H1 (cell line): ENCODE measurements at regions of chr1 and their contacts with region 1.

Region 1: GRCh38 chr1:23790696-23791515 is at the start of gene LYPLA2:
- DNase-seq: peak in 1 of 2 experiments; percentile 92
- H3K4me3 ChIP-seq: peak within 1 kb of the TSS; percentile 63 to 100 (median 96)
- H3K27ac ChIP-seq: no peak within 1 kb of the TSS
- H3K4me1 ChIP-seq: peaks cover 0 to 11% (median 6%) of the 10 kb centered on the region in 4 experiments; a peak in 5 of 7 replicates
- H3K27me3 ChIP-seq: no peaks in the 10 kb centered on the region
- CTCF ChIP-seq: 0 out of 4 replicates have a peak, but pooled peaks of 1 of the 3 experiments have one; percentile 26
- EP300 ChIP-seq: no peak
- POLR2A ChIP-seq: no peak
- RAD21 ChIP-seq: no peak
- total RNA-seq, gene LYPLA2: 138 and 152 TPM in 2 replicates

Region 2: DNA sequence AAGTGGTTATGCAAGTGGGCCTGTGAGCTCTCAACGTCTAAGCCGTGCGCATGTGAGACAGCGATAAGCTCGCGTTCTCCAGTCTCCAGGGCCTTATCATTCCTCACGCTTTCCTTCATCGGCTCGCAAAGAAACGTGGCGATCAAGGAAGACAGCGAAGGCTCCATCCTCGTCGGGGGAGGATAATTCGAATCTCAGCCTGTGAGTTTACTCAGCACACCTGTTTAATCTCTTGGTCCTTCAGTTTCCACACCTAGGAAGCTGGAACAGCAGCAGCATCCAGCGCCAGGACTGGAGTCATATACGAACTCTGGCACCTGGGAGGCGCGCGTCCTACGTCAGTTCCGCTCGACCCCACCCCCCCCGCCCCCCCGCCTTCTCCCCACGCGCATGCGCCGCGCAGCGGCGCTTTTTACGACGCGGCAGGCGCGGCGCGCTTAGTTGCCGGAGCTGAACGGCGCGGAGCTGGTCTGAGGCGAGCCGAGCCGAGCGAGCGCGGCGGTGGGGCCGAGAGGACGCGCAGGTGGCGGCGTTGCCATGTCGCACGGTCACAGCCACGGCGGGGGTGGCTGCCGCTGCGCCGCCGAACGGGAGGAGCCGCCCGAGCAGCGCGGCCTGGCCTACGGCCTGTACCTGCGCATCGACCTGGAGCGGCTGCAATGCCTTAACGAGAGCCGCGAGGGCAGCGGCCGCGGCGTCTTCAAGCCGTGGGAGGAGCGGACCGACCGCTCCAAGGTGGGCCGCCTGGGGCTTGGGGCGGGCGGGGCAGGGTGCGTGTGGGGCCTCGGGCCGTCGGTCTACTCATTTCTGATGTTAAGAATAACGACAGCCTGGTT is 12.7 kb before region 1 on chr1 and contains the start of gene PITHD1:
- CTCF ChIA-PET with region 1: interaction called, 16 read pairs
- POLR2A ChIA-PET with region 1: interaction called, 192 read pairs
- DNase-seq: peak in 1 of 2 experiments; percentile 77
- H3K4me3 ChIP-seq: peak within 1 kb of the TSS; percentile 83 to 99 (median 91)
- H3K27ac ChIP-seq: peak within 1 kb of the TSS; percentile 75
- H3K4me1 ChIP-seq: peaks cover 0 to 5% (median 3%) of the 10 kb centered on the region in 4 experiments; a peak in 3 of 7 replicates
- H3K27me3 ChIP-seq: no peaks in the 10 kb centered on the region
- CTCF ChIP-seq: no peak
- EP300 ChIP-seq: no peak
- POLR2A ChIP-seq: peak in 1 of 2 experiments; percentile 79; a peak in 2 of 3 replicates
- RAD21 ChIP-seq: no peak
- total RNA-seq, gene PITHD1: 65.0 and 68.8 TPM in 2 replicates